ENCODE measurements at regions of chr6 and their contacts with region 1.

Region 1: GRCh38 chr6:12150812-12151432 is 138.8 kb downstream of the HIVEP1 start:
- DNase-seq: peak; percentile 52 to 71
- H3K4me3 ChIP-seq: no peak overlapping the region
- H3K4me3 Mint-ChIP-seq: no peak overlapping the region
- H3K27ac Mint-ChIP-seq: no peak overlapping the region
- H3K4me1 ChIP-seq: no peaks in the 10 kb centered on the region
- H3K4me1 Mint-ChIP-seq: no peaks in the 10 kb centered on the region
- H3K27me3 ChIP-seq: no peaks in the 10 kb centered on the region
- H3K27me3 Mint-ChIP-seq: no peaks in the 10 kb centered on the region
- CTCF ChIP-seq: peak; percentile 79 to 86

Region 2: DNA sequence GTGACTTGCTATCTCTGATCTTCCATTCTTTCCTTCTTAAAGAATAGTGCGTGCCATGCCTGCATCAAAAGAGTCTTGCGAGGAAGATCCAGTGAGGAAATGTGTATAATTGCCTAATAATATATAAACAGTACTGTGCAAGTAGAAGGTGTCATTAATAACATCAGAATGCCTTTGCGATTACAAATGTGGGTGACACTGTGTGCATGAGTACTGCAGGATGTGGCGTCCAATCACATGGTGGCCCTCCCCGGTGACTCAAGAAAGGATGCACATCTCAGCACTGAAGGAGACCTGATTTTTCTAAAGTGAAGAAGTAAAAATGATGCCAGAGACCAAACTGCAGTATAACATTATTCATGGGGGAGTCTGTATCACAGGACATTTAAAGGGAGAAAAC is 31.8 kb after region 1 on chr6:
- CTCF ChIA-PET with region 1: no interaction called
- POLR2A ChIA-PET with region 1: no interaction called
- intact Hi-C with region 1: no loop called
- DNase-seq: no peak
- H3K4me3 ChIP-seq: no peak overlapping the region
- H3K4me3 Mint-ChIP-seq: no peak overlapping the region
- H3K27ac Mint-ChIP-seq: no peak overlapping the region
- H3K4me1 ChIP-seq: no peaks in the 10 kb centered on the region
- H3K4me1 Mint-ChIP-seq: no peaks in the 10 kb centered on the region
- H3K27me3 ChIP-seq: no peaks in the 10 kb centered on the region
- H3K27me3 Mint-ChIP-seq: no peaks in the 10 kb centered on the region
- CTCF ChIP-seq: no peak

Region 3: GRCh38 chr6:12233693-12234571 is 83.0 kb after region 1 on chr6:
- CTCF ChIA-PET with region 1: no interaction called
- POLR2A ChIA-PET with region 1: no interaction called
- intact Hi-C with region 1: loop called (anchors 1 kb)
- DNase-seq: peak; percentile 45 to 61
- H3K4me3 ChIP-seq: no peak overlapping the region
- H3K4me3 Mint-ChIP-seq: no peak overlapping the region
- H3K27ac Mint-ChIP-seq: no peak overlapping the region
- H3K4me1 ChIP-seq: peaks cover 15% of the 10 kb centered on the region
- H3K4me1 Mint-ChIP-seq: peaks cover 3% of the 10 kb centered on the region
- H3K27me3 ChIP-seq: no peaks in the 10 kb centered on the region
- H3K27me3 Mint-ChIP-seq: no peaks in the 10 kb centered on the region
- CTCF ChIP-seq: peak; percentile 66 to 72

Measured in Caco-2 (cell line).